Activated CD4-positive, alpha-beta T cell treated with anti-CD3 and anti-CD28 coated beads for 36 hours (primary cell): ENCODE measurements at regions of chr1 and their contacts with region 1.

Region 1: DNA sequence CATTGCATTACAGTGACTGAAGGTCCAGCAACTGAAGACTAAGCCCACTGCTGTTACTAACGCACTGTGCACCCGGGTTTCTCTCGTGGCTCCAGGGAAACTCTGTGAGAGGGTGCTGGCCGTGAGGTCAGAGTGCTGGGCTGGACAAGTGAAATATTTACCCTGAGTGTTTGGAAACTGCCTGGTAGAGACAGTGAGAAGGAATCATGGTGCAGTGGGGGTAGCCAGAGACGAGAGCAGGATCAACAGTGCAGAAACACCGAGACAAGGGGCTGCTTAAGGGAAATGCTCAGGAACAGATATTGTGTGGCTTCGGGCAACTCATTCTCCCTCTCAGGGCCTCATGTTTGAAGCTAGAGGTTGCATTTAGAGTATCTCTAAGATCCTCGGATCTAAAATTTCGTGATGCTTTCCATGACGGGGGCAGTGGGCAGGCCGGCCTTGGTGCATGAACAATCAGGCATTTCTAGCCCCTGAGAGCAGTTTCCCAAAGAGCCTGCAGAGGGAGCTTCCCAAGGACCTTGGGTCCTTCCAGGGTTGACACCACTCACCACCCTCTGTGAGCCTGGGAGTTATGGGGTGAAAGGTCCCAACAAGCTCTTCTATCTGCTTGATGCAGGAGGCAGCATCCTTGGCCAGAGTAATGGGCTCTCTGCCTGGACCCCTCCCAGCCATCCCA is 9.7 kb downstream of the CD2 start:
- DNase-seq: peak; percentile 83
- ATAC-seq: peak; percentile 6
- H3K4me3 Mint-ChIP-seq: peak overlapping the region; percentile 93
- H3K27ac Mint-ChIP-seq: peak overlapping the region; percentile 100
- H3K4me1 Mint-ChIP-seq: peaks cover 92% of the 10 kb centered on the region
- H3K27me3 Mint-ChIP-seq: no peaks in the 10 kb centered on the region

Region 2: DNA sequence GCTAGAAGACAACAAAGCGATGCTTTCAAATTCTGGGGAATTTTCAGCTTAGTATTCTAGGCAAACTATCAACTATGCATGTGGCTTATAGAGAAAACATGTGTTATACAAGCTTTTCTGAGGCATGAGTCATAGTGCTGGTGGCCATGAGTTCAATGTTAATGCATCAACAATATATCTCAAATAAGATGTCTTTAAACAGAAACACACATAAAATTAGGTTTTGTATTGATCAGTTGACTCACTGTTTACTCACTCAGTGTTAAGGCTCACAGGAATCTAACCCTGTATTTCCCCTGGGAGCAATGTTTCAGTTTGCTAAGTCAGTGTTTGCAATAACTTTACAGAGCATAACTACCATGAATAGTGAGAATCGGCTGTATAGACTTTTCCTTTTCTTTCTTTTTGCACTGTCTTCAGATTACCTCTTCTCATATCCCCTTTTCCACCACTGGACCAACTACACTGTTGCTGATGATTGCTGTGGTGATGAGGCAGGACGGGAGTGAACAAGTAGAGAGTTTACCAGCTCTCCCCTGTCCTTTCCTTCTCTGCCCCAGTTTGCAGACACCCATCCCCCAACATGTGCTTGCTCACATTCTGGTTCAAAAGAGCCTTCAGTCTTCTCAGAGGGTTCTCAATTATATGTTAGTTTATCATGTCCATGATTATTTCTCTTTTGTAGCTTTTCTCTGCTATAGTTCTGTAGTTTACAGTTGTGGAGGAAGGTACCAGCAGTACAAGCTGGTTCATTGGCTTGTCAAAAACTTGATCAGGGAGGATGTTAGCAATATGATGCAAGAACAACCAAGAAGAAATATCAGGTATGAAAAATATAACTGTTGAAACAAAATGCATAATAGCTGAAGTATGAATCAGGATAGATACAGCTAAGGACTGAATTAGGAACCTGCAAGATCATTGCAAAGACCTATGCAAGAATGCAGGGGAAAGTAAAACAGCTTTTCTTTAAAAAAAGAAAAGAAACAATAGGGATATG is 14.2 kb after region 1 on chr1:
- CTCF ChIA-PET with region 1: interaction called, 36 read pairs
- POLR2A ChIA-PET with region 1: interaction called, 107 read pairs
- intact Hi-C with region 1: no loop called
- DNase-seq: no peak
- ATAC-seq: peak; percentile 61
- H3K4me3 Mint-ChIP-seq: peak overlapping the region; percentile 47
- H3K27ac Mint-ChIP-seq: peak overlapping the region; percentile 95
- H3K4me1 Mint-ChIP-seq: peaks cover 42% of the 10 kb centered on the region
- H3K27me3 Mint-ChIP-seq: no peaks in the 10 kb centered on the region

Region 3: GRCh38 chr1:116806245-116806644 is 42.3 kb after region 1 on chr1:
- CTCF ChIA-PET with region 1: interaction called, 14 read pairs
- POLR2A ChIA-PET with region 1: interaction called, 72 read pairs
- intact Hi-C with region 1: loop called in 1 of 2 experiments (anchors 2 kb)
- DNase-seq: peak; percentile 92
- ATAC-seq: peak; percentile 68
- H3K4me3 Mint-ChIP-seq: peak overlapping the region; percentile 85
- H3K27ac Mint-ChIP-seq: peak overlapping the region; percentile 94
- H3K4me1 Mint-ChIP-seq: peaks cover 85% of the 10 kb centered on the region
- H3K27me3 Mint-ChIP-seq: no peaks in the 10 kb centered on the region

Region 4: GRCh38 chr1:116855773-116856201 is 91.9 kb after region 1 on chr1:
- CTCF ChIA-PET with region 1: no interaction called
- POLR2A ChIA-PET with region 1: no interaction called
- intact Hi-C with region 1: no loop called
- DNase-seq: no peak
- ATAC-seq: no peak
- H3K4me3 Mint-ChIP-seq: no peak overlapping the region
- H3K27ac Mint-ChIP-seq: no peak overlapping the region
- H3K4me1 Mint-ChIP-seq: peaks cover 23% of the 10 kb centered on the region
- H3K27me3 Mint-ChIP-seq: no peaks in the 10 kb centered on the region

Region 5: GRCh38 chr1:116881879-116882520 is 118.1 kb after region 1 on chr1:
- CTCF ChIA-PET with region 1: interaction called, 3 read pairs
- POLR2A ChIA-PET with region 1: interaction called, 10 read pairs
- intact Hi-C with region 1: no loop called
- DNase-seq: peak; percentile 72
- ATAC-seq: peak; percentile 77
- H3K4me3 Mint-ChIP-seq: no peak overlapping the region
- H3K27ac Mint-ChIP-seq: no peak overlapping the region
- H3K4me1 Mint-ChIP-seq: peaks cover 14% of the 10 kb centered on the region
- H3K27me3 Mint-ChIP-seq: no peaks in the 10 kb centered on the region

Region 6: DNA sequence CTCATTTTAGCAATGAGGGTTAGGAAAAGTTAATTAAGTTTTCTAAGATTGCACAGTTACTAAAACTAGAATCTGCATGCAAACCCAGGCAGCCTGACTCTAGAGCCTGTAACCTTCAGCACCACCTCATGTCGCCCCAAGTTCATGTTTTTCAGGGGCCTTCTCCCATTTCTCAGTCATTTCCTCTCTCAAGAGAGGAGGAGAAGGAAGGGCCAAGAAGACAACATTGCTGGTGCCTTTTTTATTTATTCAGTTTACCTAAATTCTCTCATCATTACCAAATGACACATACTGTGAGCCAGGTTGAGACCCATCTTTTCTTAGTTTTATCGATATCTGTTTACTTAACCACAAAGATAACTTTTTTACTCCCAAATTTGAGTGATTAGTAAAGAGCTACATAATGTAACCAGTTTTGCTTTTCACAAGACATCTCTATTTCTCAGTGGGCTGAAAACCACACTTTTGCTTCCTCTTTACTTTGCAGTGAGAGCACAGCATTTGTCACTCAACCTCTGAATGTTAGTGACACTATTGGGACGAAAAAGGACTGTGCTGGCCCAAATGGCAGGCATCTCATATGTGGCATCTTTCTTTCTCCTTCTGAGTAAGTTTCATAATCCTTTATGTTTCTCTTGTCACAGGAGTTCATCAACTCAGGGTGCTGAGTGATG is 237.5 kb after region 1 on chr1 and contains the start of gene CD101:
- CTCF ChIA-PET with region 1: interaction called, 4 read pairs
- POLR2A ChIA-PET with region 1: interaction called, 21 read pairs
- intact Hi-C with region 1: loop called in 1 of 2 experiments (anchors 5 kb)
- DNase-seq: peak; percentile 70
- ATAC-seq: peak; percentile 95
- H3K4me3 Mint-ChIP-seq: peak within 1 kb of the TSS; percentile 3
- H3K27ac Mint-ChIP-seq: peak within 1 kb of the TSS; percentile 66
- H3K4me1 Mint-ChIP-seq: peaks cover 53% of the 10 kb centered on the region
- H3K27me3 Mint-ChIP-seq: peaks cover 3% of the 10 kb centered on the region
- total RNA-seq, gene CD101: 0.30 to 0.60 TPM

Region 7: GRCh38 chr1:117077267-117077666 is 313.3 kb after region 1 on chr1:
- CTCF ChIA-PET with region 1: no interaction called
- POLR2A ChIA-PET with region 1: interaction called, 10 read pairs
- intact Hi-C with region 1: no loop called
- DNase-seq: peak; percentile 78
- ATAC-seq: peak; percentile 99
- H3K4me3 Mint-ChIP-seq: no peak overlapping the region
- H3K27ac Mint-ChIP-seq: peak overlapping the region; percentile 86
- H3K4me1 Mint-ChIP-seq: peaks cover 40% of the 10 kb centered on the region
- H3K27me3 Mint-ChIP-seq: no peaks in the 10 kb centered on the region